ENCODE measurements at regions of chr3 and their contacts with region 1.

Region 1: DNA sequence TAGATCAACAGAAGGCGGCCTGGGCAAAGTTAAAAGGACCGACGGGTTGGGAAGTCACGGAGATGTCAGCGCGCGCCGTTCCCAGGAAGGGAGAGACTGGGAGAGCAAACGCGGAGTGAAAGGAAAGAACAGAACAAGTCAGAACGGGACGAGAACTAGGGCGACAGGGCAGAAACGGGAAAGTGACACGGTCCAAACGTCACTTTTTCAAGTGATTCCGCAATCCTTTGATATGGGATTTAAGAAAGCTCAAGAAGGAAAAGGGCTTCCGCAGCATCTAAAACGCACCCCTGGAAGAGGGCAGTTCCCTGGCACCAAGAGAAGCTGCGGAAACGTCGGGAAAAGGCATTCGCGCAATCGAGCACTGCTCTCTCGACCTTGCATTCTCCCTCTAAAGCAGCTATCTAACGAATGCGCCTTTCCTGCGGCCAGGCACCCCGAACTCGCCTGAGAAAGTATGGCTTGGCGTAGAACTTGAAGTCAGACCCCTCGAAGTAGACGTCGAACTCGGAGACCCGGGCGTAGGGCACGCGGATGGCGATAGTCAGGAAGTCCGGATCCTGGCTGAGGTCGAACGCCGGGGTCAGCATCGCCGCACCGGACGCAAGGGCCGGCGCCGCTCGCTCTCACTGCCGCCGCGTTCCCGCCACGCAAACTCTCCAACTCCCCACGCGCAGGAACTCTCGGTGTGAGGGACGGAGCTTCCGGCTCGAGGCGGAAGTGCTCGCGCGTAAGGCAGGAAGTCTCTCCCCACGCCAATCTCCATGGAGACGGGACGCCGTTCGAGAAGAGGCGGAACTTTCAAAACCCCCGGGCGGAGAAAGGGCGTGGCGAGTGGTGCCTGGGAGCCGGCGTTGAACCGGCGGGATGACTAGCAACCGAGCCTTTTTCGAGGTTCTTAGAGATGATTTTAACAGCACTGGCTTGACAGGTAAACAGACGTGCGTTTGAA is at the start of gene SHQ1:
- DNase-seq: peak; percentile 98
- H3K4me3 ChIP-seq: peak within 1 kb of the TSS; percentile 67 to 81 (median 74)
- H3K27ac ChIP-seq: peak within 1 kb of the TSS; percentile 81 to 87 (median 82)
- H3K4me1 ChIP-seq: peaks cover 0 to 23% (median 18%) of the 10 kb centered on the region in 4 donors
- H3K27me3 ChIP-seq: no peaks in the 10 kb centered on the region
- CTCF ChIP-seq: no peak
- EP300 ChIP-seq: no peak
- POLR2A ChIP-seq: peak in 1 of 2 donors; percentile 36
- total RNA-seq, gene SHQ1: 8.2 to 17.4 (median 11.7) TPM

Region 2: DNA sequence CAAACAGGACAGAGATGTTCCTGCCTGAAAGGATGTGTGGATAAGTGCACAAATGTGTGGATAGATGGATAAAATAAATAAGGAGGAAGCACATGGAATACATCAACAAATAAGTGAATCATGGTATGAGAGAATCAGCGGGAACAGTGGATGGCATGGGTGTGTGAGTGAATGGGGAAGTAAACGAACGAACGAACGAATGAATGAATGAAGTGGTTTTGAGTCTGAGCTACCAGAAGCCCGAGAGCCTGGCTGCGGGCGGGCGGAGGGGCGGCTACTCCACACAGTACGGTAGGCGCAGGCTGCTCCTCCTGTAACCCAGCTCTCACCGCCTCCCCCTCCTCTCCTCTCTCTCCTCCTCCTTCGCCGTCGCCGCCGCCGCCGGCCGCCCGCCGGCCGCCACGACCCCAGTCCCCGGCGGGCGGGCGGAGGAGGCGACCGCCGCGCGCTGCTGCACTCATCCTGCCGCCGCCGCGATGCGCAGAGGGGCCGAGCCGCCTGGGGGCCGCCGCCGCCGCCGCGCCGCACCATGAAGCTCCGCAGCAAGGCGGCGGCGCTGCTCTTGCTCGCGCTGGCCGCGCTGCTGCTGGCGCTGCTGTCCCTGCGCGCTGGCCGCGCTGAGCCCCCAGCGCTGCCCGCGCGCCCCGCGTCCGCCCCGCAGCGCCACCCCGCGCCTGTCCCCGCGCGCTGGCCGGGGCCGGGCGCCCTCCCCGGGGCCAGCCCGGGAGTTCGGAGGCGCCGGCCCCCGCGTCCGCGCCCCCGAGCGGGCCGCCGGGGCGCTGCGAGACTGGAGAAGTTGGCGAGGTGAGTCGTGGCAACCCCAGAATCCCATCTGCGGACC is 39.9 kb after region 1 on chr3 and contains the start of gene GXYLT2:
- intact Hi-C with region 1: loop called (anchors 5 kb)
- DNase-seq: peak; percentile 83
- H3K4me3 ChIP-seq: peak within 1 kb of the TSS; percentile 37 to 55 (median 50)
- H3K27ac ChIP-seq: peak within 1 kb of the TSS; percentile 63 to 70 (median 68)
- H3K4me1 ChIP-seq: peaks cover 0 to 24% (median 17%) of the 10 kb centered on the region in 4 donors
- H3K27me3 ChIP-seq: no peaks in the 10 kb centered on the region
- CTCF ChIP-seq: no peak
- EP300 ChIP-seq: no peak
- POLR2A ChIP-seq: no peak
- total RNA-seq, gene GXYLT2: 3.1 to 17.4 (median 7.3) TPM

Region 3: GRCh38 chr3:72907731-72908620 is 59.9 kb after region 1 on chr3:
- intact Hi-C with region 1: no loop called
- DNase-seq: no peak
- H3K4me3 ChIP-seq: no peak overlapping the region
- H3K27ac ChIP-seq: peak overlapping the region in 3 of 4 donors; percentile 15 to 69 (median 51)
- H3K4me1 ChIP-seq: peaks cover 0 to 19% (median 10%) of the 10 kb centered on the region in 4 donors
- H3K27me3 ChIP-seq: no peaks in the 10 kb centered on the region
- CTCF ChIP-seq: no peak
- EP300 ChIP-seq: no peak
- POLR2A ChIP-seq: no peak

Region 4: GRCh38 chr3:73056014-73056844 is 208.2 kb after region 1 on chr3:
- intact Hi-C with region 1: loop called (anchors 5 kb)
- DNase-seq: no peak
- H3K4me3 ChIP-seq: no peak overlapping the region
- H3K27ac ChIP-seq: peak overlapping the region in 1 of 4 donors; percentile 21
- H3K4me1 ChIP-seq: peaks cover 0 to 35% (median 18%) of the 10 kb centered on the region in 4 donors
- H3K27me3 ChIP-seq: no peaks in the 10 kb centered on the region
- CTCF ChIP-seq: peak; percentile 22 to 52 (median 42)
- EP300 ChIP-seq: no peak
- POLR2A ChIP-seq: no peak